ENCODE measurements at regions of chr6 and their contacts with region 1.

Region 1: GRCh38 chr6:136550330-136551071 is at the start of gene MAP7:
- DNase-seq: peak; percentile 93
- H3K4me3 ChIP-seq: peak within 1 kb of the TSS; percentile 62 to 98 (median 84)
- H3K27ac ChIP-seq: peak within 1 kb of the TSS; percentile 84
- H3K4me1 ChIP-seq: peaks cover 6% of the 10 kb centered on the region
- H3K27me3 ChIP-seq: no peaks in the 10 kb centered on the region
- CTCF ChIP-seq: peak; percentile 58 to 61
- total RNA-seq, gene MAP7: 38.2 to 39.0 TPM

Region 2: GRCh38 chr6:134714679-134715421 is 1835.7 kb before region 1 on chr6:
- CTCF ChIA-PET with region 1: no interaction called
- dilution Hi-C with region 1: no loop called
- in situ Hi-C with region 1: no loop called
- intact Hi-C with region 1: no loop called
- DNase-seq: peak; percentile 72
- H3K4me3 ChIP-seq: no peak overlapping the region
- H3K27ac ChIP-seq: no peak overlapping the region
- H3K4me1 ChIP-seq: peaks cover 10% of the 10 kb centered on the region
- H3K27me3 ChIP-seq: no peaks in the 10 kb centered on the region
- CTCF ChIP-seq: no peak

Region 3: GRCh38 chr6:135451693-135452092 is 1098.8 kb before region 1 on chr6:
- CTCF ChIA-PET with region 1: no interaction called
- dilution Hi-C with region 1: no loop called
- in situ Hi-C with region 1: no loop called
- intact Hi-C with region 1: loop called (anchors 5 kb)
- DNase-seq: peak; percentile 10
- H3K4me3 ChIP-seq: no peak overlapping the region
- H3K27ac ChIP-seq: no peak overlapping the region
- H3K4me1 ChIP-seq: no peaks in the 10 kb centered on the region
- H3K27me3 ChIP-seq: no peaks in the 10 kb centered on the region
- CTCF ChIP-seq: peak; percentile 60 to 62

Region 4: GRCh38 chr6:136249811-136250685 is 300.5 kb before region 1 on chr6 and contains the start of gene MTFR2:
- CTCF ChIA-PET with region 1: no interaction called
- dilution Hi-C with region 1: no loop called
- in situ Hi-C with region 1: no loop called
- intact Hi-C with region 1: loop called (anchors 2 kb)
- DNase-seq: peak; percentile 99
- H3K4me3 ChIP-seq: peak within 1 kb of the TSS; percentile 78 to 98 (median 90)
- H3K27ac ChIP-seq: peak within 1 kb of the TSS; percentile 76
- H3K4me1 ChIP-seq: peaks cover 6% of the 10 kb centered on the region
- H3K27me3 ChIP-seq: no peaks in the 10 kb centered on the region
- CTCF ChIP-seq: no peak
- total RNA-seq, gene MTFR2: 2.0 to 7.3 TPM

Region 5: GRCh38 chr6:136317021-136317694 is 233.3 kb before region 1 on chr6:
- CTCF ChIA-PET with region 1: interaction called, 3 read pairs
- dilution Hi-C with region 1: no loop called
- in situ Hi-C with region 1: no loop called
- intact Hi-C with region 1: loop called (anchors 1 kb)
- DNase-seq: peak; percentile 57
- H3K4me3 ChIP-seq: no peak overlapping the region
- H3K27ac ChIP-seq: no peak overlapping the region
- H3K4me1 ChIP-seq: no peaks in the 10 kb centered on the region
- H3K27me3 ChIP-seq: peaks cover 3% of the 10 kb centered on the region
- CTCF ChIP-seq: peak; percentile 90 to 93

Region 6: DNA sequence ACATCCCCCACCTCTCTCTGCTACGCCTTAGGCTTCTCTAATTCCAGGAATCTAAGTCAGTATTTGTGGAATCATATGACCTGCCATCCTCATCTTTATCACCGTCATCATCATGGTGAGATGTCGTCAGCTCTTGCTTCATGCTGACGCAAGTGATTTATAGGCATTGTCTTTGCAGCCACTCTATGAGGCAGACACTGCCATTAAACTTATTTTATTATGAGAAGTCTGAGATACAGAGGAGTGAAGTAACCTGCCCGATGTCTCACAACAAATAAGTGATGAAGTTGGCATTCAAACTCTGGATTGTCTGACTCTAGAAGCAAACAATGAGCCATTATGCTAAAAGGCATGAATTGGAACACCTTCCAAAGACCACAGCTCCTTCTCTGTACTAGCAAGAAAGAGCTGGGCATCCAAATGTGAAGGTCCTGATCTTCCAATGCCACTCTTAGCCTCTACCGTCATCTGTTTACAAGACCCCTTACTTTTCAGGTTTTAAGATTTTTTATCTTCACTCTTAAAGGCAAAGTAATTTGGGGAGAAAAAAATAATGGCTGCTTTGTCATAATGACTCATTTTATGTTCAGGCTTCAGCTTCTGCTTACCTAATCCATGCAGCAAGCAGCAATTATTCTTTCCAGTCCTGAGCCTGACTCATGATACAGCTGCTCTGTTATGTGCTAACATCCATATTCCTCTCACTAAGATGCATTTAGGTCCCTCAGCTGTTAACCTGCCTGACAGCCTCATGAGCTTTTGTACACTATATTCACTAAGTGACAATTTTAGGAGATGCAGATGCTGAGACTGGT is 147.1 kb before region 1 on chr6:
- CTCF ChIA-PET with region 1: interaction called, 4 read pairs
- dilution Hi-C with region 1: no loop called
- in situ Hi-C with region 1: loop called in 1 of 2 experiments (anchors 25 kb)
- intact Hi-C with region 1: loop called (anchors 1 kb)
- DNase-seq: peak; percentile 98
- H3K4me3 ChIP-seq: peak overlapping the region in 1 of 3 experiments; percentile 14
- H3K27ac ChIP-seq: peak overlapping the region; percentile 98
- H3K4me1 ChIP-seq: peaks cover 21% of the 10 kb centered on the region
- H3K27me3 ChIP-seq: no peaks in the 10 kb centered on the region
- CTCF ChIP-seq: no peak

Region 7: DNA sequence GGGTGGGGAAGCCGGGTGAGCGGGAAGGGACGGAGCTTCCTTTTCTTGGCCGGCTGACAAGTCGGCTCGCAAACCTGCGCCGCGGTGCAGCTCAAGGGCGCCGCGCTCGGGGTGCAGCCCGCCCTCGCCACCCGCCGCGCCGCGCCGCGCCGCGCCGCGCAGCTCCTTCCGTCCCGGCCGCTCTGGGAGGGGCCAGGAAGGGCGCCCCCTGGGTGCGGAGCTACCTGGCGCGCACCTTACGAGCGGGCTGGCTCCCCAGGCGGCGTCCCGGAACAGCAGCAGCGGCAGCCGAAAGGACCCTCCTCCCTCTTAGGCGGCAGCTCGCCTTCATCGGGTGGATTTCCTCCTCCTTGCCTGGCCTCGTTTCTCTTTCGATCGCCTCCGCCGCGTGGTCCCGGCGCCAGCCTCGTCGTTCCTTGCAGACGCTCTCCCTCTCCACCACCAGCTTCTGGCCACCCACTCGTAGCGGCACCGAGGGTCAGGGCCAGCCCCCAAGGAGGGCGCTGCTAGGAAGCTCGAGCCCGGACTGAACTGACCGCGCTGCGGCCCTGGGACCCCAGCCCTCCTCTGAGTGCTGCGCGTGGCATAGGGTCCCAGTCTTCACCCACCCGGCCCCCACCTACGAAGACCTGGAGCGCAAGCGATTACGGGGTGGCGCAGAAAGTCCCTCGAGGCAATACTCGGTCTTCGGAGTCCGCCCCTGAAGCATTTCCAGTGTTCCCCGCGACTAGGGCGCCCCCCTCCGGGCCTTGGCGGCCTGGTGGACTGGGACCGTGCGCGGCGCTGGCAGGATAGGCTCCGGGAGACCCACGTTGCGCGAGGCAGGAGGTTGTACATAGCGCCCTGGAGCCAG is 242.1 kb after region 1 on chr6 and contains the start of gene MAP3K5:
- CTCF ChIA-PET with region 1: interaction called, 3 read pairs
- dilution Hi-C with region 1: no loop called
- in situ Hi-C with region 1: no loop called
- intact Hi-C with region 1: loop called (anchors 1 kb)
- DNase-seq: peak; percentile 90
- H3K4me3 ChIP-seq: peak within 1 kb of the TSS; percentile 68 to 97 (median 79)
- H3K27ac ChIP-seq: peak within 1 kb of the TSS; percentile 82
- H3K4me1 ChIP-seq: peaks cover 19% of the 10 kb centered on the region
- H3K27me3 ChIP-seq: no peaks in the 10 kb centered on the region
- CTCF ChIP-seq: peak; percentile 66 to 95
- total RNA-seq, gene MAP3K5: 4.2 to 8.8 TPM